Activated T-helper 1 cell treated with anti-CD3 and anti-CD28 coated beads, Interleukin-12 subunit alpha, Interleukin-12 subunit beta, Interleukin-2, Interleukin-4 antibody, amounts not matched to agents 30 ng/mL and 10 ng/mL and 1 ng/mL, durations not matched to agents 14 hours and 24 hours and 36 hours (primary cell): ENCODE measurements at regions of chr13 and their contacts with region 1.

Region 1: DNA sequence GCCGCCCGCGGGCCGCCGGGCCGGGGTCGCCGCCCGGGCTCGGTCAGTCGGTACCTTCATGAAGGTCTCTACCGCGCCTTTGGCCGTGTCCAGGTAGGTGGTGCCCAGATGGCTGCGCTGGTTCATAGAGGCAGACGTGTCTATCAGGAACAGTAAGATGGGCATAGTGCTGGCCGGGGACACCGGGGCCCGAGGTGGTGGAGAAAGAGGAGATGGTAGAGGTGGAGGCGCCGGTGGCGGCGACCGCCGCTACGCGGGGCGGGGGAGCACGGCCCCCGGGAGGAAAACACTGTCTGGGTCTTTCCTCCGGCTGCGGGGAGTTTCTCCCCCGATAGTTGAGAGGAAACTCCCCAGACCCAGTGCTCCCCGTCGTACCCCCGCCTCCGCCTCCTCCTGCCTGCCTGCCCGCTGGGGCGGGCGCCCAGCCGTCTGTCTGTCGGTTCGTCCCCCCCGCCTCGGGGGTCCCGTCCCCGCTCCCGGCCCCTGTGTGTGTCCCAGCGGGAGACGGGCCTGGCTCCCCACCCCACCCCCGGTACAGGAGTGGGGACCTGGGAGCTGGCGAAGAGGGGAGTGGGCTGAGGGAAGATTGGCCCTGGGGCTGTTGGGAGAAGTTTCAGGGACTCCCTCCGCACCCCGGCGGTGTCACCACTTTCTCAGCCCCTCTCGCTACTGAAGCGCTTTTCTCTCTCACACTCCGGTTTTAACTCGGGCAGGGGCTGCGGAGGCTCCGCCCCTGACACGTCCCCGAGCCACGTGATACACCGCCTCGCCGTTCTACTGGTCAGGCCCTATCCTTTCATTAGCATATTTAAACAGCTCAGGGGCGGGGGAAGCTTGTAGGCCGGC is at the start of gene INTS6:
- DNase-seq: peak; percentile 99
- H3K4me3 Mint-ChIP-seq: peak within 1 kb of the TSS; percentile 92
- H3K27ac Mint-ChIP-seq: peak within 1 kb of the TSS; percentile 98
- H3K4me1 Mint-ChIP-seq: peaks cover 52% of the 10 kb centered on the region
- H3K27me3 Mint-ChIP-seq: no peaks in the 10 kb centered on the region
- total RNA-seq, gene INTS6: 76.6 and 81.7 TPM in 2 replicates

Region 2: DNA sequence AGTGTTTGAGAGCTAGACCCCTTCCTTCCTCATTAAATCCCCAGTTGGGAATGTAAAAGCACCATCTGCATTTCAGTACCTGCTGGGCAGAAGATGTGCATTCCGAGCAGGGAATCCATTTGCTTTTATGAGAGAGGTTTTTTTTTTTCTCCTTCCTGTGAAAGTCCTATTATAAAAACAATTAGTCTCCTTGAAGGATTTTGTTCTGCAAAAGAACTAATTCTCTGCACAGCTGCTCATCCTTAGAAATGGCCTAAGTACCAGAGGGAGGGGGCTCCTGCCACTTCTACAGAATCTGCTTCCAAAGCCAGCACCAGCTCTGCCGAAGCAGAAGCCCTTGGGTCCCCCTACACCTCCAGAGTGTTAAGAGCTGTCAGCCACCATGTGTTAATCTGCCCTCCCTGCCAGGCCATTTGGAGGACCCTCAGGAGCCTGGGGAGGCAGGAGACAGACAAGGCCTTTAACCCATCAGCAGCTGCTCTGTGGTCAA is 149.5 kb before region 1 on chr13:
- intact Hi-C with region 1: no loop called
- DNase-seq: no peak
- H3K4me3 Mint-ChIP-seq: no peak overlapping the region
- H3K27ac Mint-ChIP-seq: no peak overlapping the region
- H3K4me1 Mint-ChIP-seq: no peaks in the 10 kb centered on the region
- H3K27me3 Mint-ChIP-seq: no peaks in the 10 kb centered on the region

Region 3: GRCh38 chr13:51502153-51502651 is 49.6 kb after region 1 on chr13:
- intact Hi-C with region 1: loop called (anchors 2 kb)
- DNase-seq: no peak
- H3K4me3 Mint-ChIP-seq: no peak overlapping the region
- H3K27ac Mint-ChIP-seq: peak overlapping the region; percentile 18
- H3K4me1 Mint-ChIP-seq: peaks cover 14% of the 10 kb centered on the region
- H3K27me3 Mint-ChIP-seq: peaks cover 8% of the 10 kb centered on the region

Region 4: GRCh38 chr13:51614350-51614786 is 161.8 kb after region 1 on chr13:
- intact Hi-C with region 1: loop called (anchors 1 kb)
- DNase-seq: peak; percentile 30
- H3K4me3 Mint-ChIP-seq: peak overlapping the region; percentile 86
- H3K27ac Mint-ChIP-seq: peak overlapping the region; percentile 97
- H3K4me1 Mint-ChIP-seq: peaks cover 18% of the 10 kb centered on the region
- H3K27me3 Mint-ChIP-seq: peaks cover 2% of the 10 kb centered on the region

Region 5: GRCh38 chr13:51797664-51798488 is 345.3 kb after region 1 on chr13:
- intact Hi-C with region 1: loop called (anchors 1 kb)
- DNase-seq: peak; percentile 52
- H3K4me3 Mint-ChIP-seq: no peak overlapping the region
- H3K27ac Mint-ChIP-seq: no peak overlapping the region
- H3K4me1 Mint-ChIP-seq: peaks cover 52% of the 10 kb centered on the region
- H3K27me3 Mint-ChIP-seq: no peaks in the 10 kb centered on the region

Region 6: DNA sequence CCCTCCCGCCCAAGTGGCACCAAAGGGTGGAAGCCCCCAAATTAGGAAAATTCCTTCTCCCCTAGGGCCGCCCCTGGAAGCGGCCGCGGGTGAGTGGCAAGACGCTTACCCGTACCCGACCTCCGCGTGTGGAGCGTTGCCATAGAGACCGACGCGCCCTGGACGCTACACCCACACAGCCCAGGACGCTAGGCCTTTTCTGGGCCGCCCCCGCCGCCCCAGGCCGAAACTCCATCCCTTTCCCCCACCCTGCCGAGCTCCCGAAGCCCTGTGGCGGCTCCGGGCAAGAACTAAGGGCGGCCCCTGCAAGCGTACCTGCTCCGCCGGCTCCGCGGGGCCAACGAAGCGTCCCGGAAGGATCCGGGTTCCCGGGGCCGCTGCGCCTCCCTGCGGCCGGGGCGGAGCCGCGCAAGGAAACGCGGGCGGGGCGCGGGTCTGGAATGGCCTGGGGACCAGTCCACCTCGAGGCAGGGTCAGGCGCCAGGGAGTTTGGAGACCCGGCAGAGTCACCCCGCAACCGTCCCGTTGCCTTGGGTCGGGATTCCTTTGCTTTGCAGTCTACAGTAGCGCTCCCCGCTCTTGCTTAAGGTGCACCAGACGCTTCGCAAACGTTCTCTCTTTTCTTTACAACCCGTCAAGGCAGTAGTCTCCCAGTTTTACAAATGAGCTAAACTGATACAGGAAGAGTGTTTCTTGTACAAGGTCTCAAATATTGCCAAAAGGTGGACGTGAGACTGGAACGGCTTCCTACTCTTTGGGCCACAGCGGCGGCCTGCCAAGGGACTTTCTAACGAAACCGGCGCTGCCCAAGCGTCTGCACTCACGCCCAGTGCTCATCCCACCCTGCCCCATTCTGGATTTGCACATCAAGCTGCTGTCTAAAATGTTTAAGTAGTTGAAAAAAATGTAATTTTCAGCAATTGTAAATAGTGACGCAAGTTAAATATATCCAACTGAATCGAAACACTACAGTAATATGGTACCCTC is 676.4 kb after region 1 on chr13 and contains the start of gene NEK5:
- intact Hi-C with region 1: loop called (anchors 10 kb)
- DNase-seq: peak; percentile 52
- H3K4me3 Mint-ChIP-seq: peak within 1 kb of the TSS; percentile 77
- H3K27ac Mint-ChIP-seq: no peak within 1 kb of the TSS
- H3K4me1 Mint-ChIP-seq: peaks cover 14% of the 10 kb centered on the region
- H3K27me3 Mint-ChIP-seq: peaks cover 8% of the 10 kb centered on the region
- total RNA-seq, gene NEK5: not detected in 2 replicates

Region 7: DNA sequence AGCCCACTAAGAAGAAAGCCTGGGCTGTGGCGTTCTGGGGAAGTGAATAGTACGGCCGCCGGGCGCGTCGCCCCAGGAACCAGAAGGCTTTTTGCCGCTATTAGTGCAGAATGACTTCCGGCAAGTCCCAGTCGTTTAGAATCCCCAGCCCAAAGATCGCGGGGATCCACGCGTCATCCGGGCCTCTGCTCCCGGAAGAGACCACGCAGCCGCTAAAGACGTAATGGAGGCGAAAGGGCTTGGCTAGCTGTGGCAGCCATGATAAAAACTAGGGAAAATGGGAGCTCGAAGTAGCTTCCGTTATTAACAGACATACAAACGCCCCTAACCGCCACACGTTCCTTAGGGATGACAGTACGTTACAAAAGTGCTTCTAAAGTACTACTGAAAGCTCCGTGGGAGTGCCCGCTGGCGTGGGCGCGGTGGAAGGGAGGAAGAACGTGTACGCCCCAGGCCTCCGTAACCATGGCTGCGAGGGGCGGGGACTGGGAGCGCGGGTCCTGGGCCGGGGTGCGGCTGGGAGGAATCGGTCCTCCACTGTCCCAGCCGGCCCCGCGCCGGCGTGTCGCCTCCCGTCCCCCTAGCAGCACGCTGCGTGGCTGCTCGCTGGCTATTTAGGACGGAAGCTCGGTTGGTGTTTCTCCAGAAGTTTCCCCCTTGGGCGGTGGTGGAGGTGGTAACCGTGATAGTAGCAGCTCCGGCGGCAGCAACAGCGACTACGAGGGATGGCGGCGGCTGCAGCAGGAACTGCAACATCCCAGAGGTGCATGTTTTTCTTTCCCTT is 1199.8 kb after region 1 on chr13 and contains the start of gene SUGT1:
- intact Hi-C with region 1: loop called (anchors 2 kb)
- DNase-seq: peak; percentile 93
- H3K4me3 Mint-ChIP-seq: no peak within 1 kb of the TSS
- H3K27ac Mint-ChIP-seq: no peak within 1 kb of the TSS
- H3K4me1 Mint-ChIP-seq: peaks cover 15% of the 10 kb centered on the region
- H3K27me3 Mint-ChIP-seq: no peaks in the 10 kb centered on the region
- total RNA-seq, gene SUGT1: 63.3 and 66.1 TPM in 2 replicates